ENCODE measurements at regions of chr1 and their contacts with region 1.

Region 1: DNA sequence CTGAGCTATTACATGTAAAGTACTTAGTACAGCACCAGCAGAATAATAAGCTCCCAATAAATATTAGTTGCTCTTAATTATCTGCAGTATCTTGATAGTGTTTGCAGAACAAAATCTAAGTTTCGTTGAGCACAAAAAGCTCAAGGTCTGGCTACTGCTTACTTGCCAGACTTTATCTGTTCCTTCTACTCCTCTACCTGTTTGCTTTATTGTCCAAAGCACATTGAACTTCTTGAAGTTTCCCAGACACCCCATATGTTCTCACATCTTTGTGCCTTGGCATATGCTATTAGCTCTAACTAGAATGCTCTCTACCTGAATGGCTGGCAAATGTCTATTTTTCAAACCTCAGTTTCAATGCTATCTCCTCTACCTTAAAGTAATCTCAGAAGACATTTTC is 54.9 kb downstream of the LRRC40 start:
- DNase-seq: no peak
- H3K4me3 ChIP-seq: no peak overlapping the region
- H3K27ac ChIP-seq: no peak overlapping the region
- H3K4me1 ChIP-seq: no peaks in the 10 kb centered on the region
- H3K27me3 ChIP-seq: no peaks in the 10 kb centered on the region
- CTCF ChIP-seq: no peak
- EP300 ChIP-seq: no peak
- RAD21 ChIP-seq: no peak

Region 2: DNA sequence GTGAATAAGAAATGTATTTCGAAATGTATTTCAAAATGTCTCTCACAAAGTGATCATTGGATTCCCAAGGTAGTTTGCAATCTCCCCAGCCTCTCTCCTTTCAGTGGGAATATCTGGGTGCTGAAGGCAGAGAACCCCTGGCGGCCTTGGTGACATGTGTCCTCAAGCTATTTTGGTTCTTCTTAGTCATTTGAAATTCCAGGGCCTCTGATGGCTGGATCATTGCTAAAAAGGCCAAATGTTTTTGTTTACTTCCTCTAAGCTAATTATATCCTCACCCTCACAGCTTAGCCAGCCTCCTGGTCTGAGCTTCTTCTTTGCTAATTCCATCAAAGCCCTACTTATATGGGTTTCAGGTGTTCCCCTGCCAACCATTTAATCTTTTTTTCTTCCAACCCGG is 16.3 kb before region 1 on chr1:
- CTCF ChIA-PET with region 1: interaction called, 10 read pairs
- POLR2A ChIA-PET with region 1: no interaction called
- DNase-seq: no peak
- H3K4me3 ChIP-seq: no peak overlapping the region
- H3K27ac ChIP-seq: no peak overlapping the region
- H3K4me1 ChIP-seq: no peaks in the 10 kb centered on the region
- H3K27me3 ChIP-seq: no peaks in the 10 kb centered on the region
- CTCF ChIP-seq: no peak
- EP300 ChIP-seq: no peak
- RAD21 ChIP-seq: no peak